ENCODE measurements at regions of chr5 and their contacts with region 1.

Region 1: GRCh38 chr5:154072414-154073171 is 33.8 kb downstream of the MFAP3 start:
- DNase-seq: peak; percentile 58
- ATAC-seq: peak; percentile 96
- H3K4me3 ChIP-seq: peak overlapping the region; percentile 6 to 7; a peak in 2 of 4 replicates
- H3K27ac ChIP-seq: no peak overlapping the region
- H3K4me1 ChIP-seq: no peaks in the 10 kb centered on the region
- H3K27me3 ChIP-seq: peaks cover 2% of the 10 kb centered on the region
- CTCF ChIP-seq: peak; percentile 91

Region 2: DNA sequence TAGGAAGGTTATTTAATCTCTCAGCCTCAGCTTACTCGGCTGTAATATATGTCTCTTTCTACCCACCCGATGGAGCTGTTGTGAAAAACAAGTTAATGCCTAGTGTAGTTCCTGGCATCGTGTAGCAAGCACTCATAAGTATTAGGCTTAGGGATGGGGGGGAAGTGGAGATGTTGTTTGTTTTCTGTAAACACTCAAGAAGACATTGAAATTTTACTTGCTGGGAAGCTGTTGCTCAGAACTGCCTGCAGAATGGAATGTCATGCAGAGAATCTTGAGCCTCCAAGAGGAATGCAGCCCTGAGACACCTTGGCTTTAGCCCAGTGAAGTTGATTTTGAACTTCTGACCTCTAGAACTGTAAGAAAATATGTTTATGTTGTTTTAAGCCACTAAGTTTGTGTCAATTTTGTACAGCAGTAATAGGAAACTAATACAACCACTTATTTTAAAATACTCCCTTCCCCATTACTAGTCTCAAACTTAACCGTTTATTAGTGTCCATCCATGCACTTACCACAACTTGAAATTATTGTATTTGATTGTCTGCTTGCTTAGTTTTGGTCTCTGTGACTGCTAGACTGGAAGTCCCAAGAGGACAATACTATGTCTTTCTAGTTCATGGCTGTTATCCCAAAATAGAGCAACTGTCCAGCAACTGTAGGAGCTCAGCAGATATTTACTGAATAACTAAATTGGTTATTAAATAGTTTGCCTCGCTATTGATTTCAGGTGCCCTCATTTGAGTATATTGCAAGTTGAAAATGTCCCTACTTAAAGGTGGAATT is 20.0 kb after region 1 on chr5:
- CTCF ChIA-PET with region 1: no interaction called
- POLR2A ChIA-PET with region 1: no interaction called
- in situ Hi-C with region 1: no loop called
- intact Hi-C with region 1: no loop called
- DNase-seq: no peak
- ATAC-seq: no peak
- H3K4me3 ChIP-seq: no peak overlapping the region
- H3K27ac ChIP-seq: no peak overlapping the region
- H3K4me1 ChIP-seq: no peaks in the 10 kb centered on the region
- H3K27me3 ChIP-seq: peaks cover 8% of the 10 kb centered on the region; the same call in 1 of the 2 replicates
- CTCF ChIP-seq: no peak

Region 3: GRCh38 chr5:154179846-154180710 is 107.5 kb after region 1 on chr5:
- CTCF ChIA-PET with region 1: interaction called, 13 read pairs
- POLR2A ChIA-PET with region 1: interaction called, 4 read pairs
- in situ Hi-C with region 1: no loop called
- intact Hi-C with region 1: loop called (anchors 1 kb)
- DNase-seq: no peak
- ATAC-seq: peak; percentile 98
- H3K4me3 ChIP-seq: no peak overlapping the region
- H3K27ac ChIP-seq: no peak overlapping the region
- H3K4me1 ChIP-seq: no peaks in the 10 kb centered on the region
- H3K27me3 ChIP-seq: peaks cover 10% of the 10 kb centered on the region
- CTCF ChIP-seq: peak; percentile 87

Region 4: DNA sequence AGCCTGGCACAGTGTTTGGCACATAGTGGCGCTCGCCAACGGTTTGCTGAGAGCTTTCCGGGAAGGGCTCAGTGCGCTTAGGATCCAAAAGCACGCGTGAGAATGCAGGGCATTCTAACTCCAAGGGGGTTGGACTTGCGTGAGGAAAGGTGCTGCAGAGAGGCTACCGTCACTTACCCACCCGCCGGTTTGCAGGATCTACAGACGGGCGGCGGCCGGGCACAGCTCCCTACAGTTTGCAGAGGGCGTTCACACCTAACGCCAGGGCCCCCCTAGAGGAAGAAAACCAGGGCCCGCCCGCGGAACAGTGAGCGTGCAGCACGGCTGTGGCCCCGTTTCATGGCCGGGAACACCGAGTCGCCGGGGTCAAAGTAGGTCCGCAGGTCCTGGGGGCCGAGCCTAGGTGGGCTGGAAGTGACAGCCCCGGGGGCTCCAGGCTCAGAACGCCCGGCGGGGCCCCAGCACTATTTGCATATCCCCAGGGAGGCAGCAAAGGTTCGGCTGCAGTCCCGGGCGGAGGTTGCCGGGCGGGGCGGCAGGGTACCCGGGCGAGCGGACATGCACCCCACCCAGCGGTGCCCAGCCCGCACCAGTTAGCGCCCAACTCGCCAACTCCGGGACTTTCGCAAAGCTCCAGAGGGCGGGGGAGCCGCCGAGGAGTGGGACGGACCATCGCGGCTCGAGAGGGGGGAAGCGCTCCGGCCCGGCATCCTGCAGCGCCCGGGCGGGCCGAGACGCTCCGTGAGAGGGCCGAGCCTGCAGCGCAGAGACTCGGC is 117.4 kb after region 1 on chr5:
- CTCF ChIA-PET with region 1: interaction called, 10 read pairs
- POLR2A ChIA-PET with region 1: no interaction called
- in situ Hi-C with region 1: no loop called
- intact Hi-C with region 1: no loop called
- DNase-seq: no peak
- ATAC-seq: peak; percentile 92
- H3K4me3 ChIP-seq: peak overlapping the region; percentile 75 to 83
- H3K27ac ChIP-seq: peak overlapping the region; percentile 72
- H3K4me1 ChIP-seq: peaks cover 10% of the 10 kb centered on the region
- H3K27me3 ChIP-seq: no peaks in the 10 kb centered on the region
- CTCF ChIP-seq: peak; percentile 78

Region 5: DNA sequence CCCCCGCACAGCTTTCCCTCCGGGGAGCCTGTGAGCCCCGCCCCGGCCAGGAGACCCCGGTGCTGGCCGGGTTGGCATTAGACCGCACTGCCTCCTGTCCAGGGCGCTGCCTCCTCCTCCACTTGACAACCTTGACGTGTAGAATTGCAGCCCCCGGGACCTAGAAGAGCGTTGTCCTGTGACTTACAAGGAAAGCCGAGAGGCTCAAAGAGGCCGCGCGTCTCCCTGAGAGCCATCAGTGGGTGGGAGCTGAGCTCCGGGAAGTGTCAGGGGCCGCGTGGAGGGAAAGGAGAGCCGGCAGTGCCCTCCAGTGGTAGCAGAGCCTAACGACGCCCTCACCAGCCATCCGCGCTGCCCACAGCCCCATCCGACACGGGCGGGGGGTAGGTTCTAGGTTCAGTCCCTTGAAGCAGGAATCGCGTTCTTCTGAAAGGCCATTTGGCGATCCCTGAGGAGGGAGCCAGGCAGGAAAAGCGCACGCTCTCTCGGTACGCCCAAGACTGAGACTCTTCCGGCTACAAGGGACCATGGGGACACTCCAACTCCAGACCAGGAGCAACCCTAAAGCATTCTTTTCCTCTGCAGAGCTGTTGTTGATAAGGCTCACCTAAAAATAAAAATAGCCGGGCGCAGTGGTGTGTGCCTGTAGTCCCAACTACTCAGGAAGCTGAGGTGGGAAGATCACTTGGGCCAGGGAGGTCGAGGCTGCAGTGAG is 332.6 kb after region 1 on chr5:
- CTCF ChIA-PET with region 1: interaction called, 21 read pairs
- POLR2A ChIA-PET with region 1: no interaction called
- in situ Hi-C with region 1: no loop called
- intact Hi-C with region 1: loop called (anchors 1 kb)
- DNase-seq: peak; percentile 30
- ATAC-seq: peak; percentile 96
- H3K4me3 ChIP-seq: peak overlapping the region; percentile 8 to 42; a peak in 3 of 4 replicates
- H3K27ac ChIP-seq: no peak overlapping the region
- H3K4me1 ChIP-seq: no peaks in the 10 kb centered on the region
- H3K27me3 ChIP-seq: no peaks in the 10 kb centered on the region
- CTCF ChIP-seq: peak; percentile 91

Measured in Panc1 (cell line).